ENCODE measurements at regions of chr2 and their contacts with region 1.

Region 1: DNA sequence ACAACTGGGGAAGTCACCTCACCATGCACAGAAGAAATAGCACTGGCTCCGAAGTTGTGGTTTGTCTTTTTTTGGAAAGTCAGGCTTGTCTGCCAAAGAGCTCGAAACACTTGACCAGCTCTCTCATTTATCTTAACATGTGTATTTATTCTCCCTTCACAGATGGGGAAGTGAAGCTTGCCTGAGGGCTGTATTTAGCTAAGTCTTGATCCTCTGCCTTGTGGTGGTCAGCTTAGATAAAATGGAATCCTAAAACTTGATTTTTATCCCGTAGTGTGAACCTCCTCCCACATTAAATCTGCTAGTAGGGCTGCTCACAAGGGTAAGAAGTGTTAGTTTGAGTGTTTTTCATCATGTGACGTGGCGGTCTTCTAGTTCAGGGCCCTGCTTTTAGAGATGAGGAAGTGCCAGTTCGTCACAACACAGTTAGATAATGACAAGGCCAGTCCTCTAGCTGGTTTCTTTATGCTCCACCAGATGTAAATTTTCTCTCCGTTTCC is 89.7 kb downstream of the TMEM247 start:
- DNase-seq: peak; percentile 82
- ATAC-seq: peak; percentile 91
- H3K4me3 ChIP-seq: peak overlapping the region; percentile 41; the same call in 1 of the 2 replicates
- H3K27ac ChIP-seq: peak overlapping the region; percentile 97
- H3K4me1 ChIP-seq: peaks cover 89% of the 10 kb centered on the region
- H3K27me3 ChIP-seq: no peaks in the 10 kb centered on the region
- CTCF ChIP-seq: no peak
- EP300 ChIP-seq: peak in 1 of 2 experiments; percentile 47; a peak in 1 of 4 replicates
- POLR2A ChIP-seq: peak; percentile 63
- RAD21 ChIP-seq: no peak

Region 2: GRCh38 chr2:46164581-46165301 is 404.4 kb before region 1 on chr2:
- CTCF ChIA-PET with region 1: no interaction called
- POLR2A ChIA-PET with region 1: no interaction called
- RAD21 ChIA-PET with region 1: no interaction called
- SMC1A ChIA-PET with region 1: no interaction called
- in situ Hi-C with region 1: no loop called
- intact Hi-C with region 1: no loop called
- DNase-seq: no peak
- ATAC-seq: no peak
- H3K4me3 ChIP-seq: no peak overlapping the region
- H3K27ac ChIP-seq: no peak overlapping the region
- H3K4me1 ChIP-seq: no peaks in the 10 kb centered on the region
- H3K27me3 ChIP-seq: no peaks in the 10 kb centered on the region
- CTCF ChIP-seq: no peak
- EP300 ChIP-seq: no peak
- POLR2A ChIP-seq: no peak
- RAD21 ChIP-seq: no peak

Region 3: GRCh38 chr2:46461011-46461674 is 108.0 kb before region 1 on chr2:
- CTCF ChIA-PET with region 1: interaction called, 5 read pairs
- POLR2A ChIA-PET with region 1: interaction called, 3 read pairs
- RAD21 ChIA-PET with region 1: interaction called, 10 read pairs
- SMC1A ChIA-PET with region 1: interaction called, 10 read pairs
- in situ Hi-C with region 1: no loop called
- intact Hi-C with region 1: no loop called
- DNase-seq: peak; percentile 39
- ATAC-seq: peak; percentile 85
- H3K4me3 ChIP-seq: no peak overlapping the region; the same call in 1 of the 2 replicates
- H3K27ac ChIP-seq: 0 out of 2 replicates have a peak overlapping the region, but pooled peaks have one; percentile 0
- H3K4me1 ChIP-seq: peaks cover 18% of the 10 kb centered on the region
- H3K27me3 ChIP-seq: no peaks in the 10 kb centered on the region; a peak in 1 of 4 replicates
- CTCF ChIP-seq: peak; percentile 97 to 99 (median 99); a peak in 5 of 6 replicates
- EP300 ChIP-seq: no peak
- POLR2A ChIP-seq: no peak
- RAD21 ChIP-seq: peak; percentile 96

Region 4: GRCh38 chr2:46490521-46491141 is 78.5 kb before region 1 on chr2:
- CTCF ChIA-PET with region 1: interaction called, 6 read pairs
- POLR2A ChIA-PET with region 1: interaction called, 7 read pairs
- RAD21 ChIA-PET with region 1: interaction called, 15 read pairs
- SMC1A ChIA-PET with region 1: interaction called, 14 read pairs
- in situ Hi-C with region 1: no loop called
- intact Hi-C with region 1: no loop called
- DNase-seq: no peak
- ATAC-seq: peak; percentile 34
- H3K4me3 ChIP-seq: no peak overlapping the region
- H3K27ac ChIP-seq: 0 out of 2 replicates have a peak overlapping the region, but pooled peaks have one; percentile 12
- H3K4me1 ChIP-seq: peaks cover 30% of the 10 kb centered on the region
- H3K27me3 ChIP-seq: no peaks in the 10 kb centered on the region
- CTCF ChIP-seq: peak; percentile 1 to 46 (median 28); a peak in 4 of 6 replicates
- EP300 ChIP-seq: no peak
- POLR2A ChIP-seq: no peak
- RAD21 ChIP-seq: peak; percentile 65

Region 5: DNA sequence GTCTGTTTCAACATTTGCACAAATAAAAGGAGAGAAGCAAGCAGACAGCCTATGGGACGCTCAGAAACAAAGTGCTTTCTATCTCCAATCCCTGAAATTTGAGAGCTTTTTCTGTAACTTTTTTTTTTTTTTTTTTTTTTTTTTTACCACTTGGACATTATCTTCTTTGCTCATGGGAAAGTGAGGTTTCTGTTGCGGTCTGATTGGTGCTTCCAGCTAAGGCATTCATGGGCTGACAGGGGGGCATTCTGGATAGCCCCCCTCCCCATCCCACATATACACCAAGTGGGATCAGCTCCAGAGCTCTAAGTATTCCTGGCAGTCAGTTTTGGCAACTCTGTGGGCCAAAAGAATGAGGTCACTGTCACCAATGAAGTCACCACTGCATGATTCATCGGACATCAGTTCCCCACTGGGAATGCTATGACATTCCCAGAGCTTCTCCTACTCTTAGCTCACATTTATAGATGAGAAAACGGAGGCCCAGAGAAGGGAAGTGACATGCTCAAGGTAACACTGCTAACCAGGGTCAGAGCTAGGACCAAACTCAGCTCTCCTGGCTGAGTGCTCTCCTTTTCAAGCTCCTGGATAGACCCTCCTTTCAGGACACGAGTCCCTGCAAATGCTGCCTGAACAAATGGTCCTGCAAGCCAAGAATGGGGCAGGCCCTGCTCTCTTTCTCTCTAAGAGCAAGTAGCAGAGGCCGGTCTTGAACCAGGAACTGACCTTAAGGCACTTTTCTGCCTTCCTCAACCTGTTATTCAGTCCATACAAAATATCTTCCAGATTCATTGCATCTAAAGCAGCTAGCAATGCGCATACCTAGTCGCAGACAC is 28.4 kb before region 1 on chr2:
- CTCF ChIA-PET with region 1: interaction called, 7 read pairs
- POLR2A ChIA-PET with region 1: interaction called, 91 read pairs
- RAD21 ChIA-PET with region 1: interaction called, 127 read pairs
- SMC1A ChIA-PET with region 1: interaction called, 188 read pairs
- in situ Hi-C with region 1: no loop called
- intact Hi-C with region 1: no loop called
- DNase-seq: no peak
- ATAC-seq: no peak
- H3K4me3 ChIP-seq: peak overlapping the region; percentile 58
- H3K27ac ChIP-seq: 0 out of 2 replicates have a peak overlapping the region, but pooled peaks have one; percentile 77
- H3K4me1 ChIP-seq: peaks cover 43% of the 10 kb centered on the region
- H3K27me3 ChIP-seq: no peaks in the 10 kb centered on the region
- CTCF ChIP-seq: no peak
- EP300 ChIP-seq: no peak
- POLR2A ChIP-seq: no peak
- RAD21 ChIP-seq: no peak

Region 6: GRCh38 chr2:46555011-46555410 is 14.1 kb before region 1 on chr2:
- CTCF ChIA-PET with region 1: interaction called, 44 read pairs
- POLR2A ChIA-PET with region 1: interaction called, 91 read pairs
- RAD21 ChIA-PET with region 1: interaction called, 127 read pairs
- SMC1A ChIA-PET with region 1: interaction called, 188 read pairs
- in situ Hi-C with region 1: no loop called
- intact Hi-C with region 1: no loop called
- DNase-seq: no peak
- ATAC-seq: peak; percentile 71
- H3K4me3 ChIP-seq: no peak overlapping the region
- H3K27ac ChIP-seq: no peak overlapping the region
- H3K4me1 ChIP-seq: peaks cover 23% of the 10 kb centered on the region
- H3K27me3 ChIP-seq: no peaks in the 10 kb centered on the region
- CTCF ChIP-seq: peak; percentile 31 to 60 (median 48)
- EP300 ChIP-seq: no peak
- POLR2A ChIP-seq: no peak
- RAD21 ChIP-seq: peak; percentile 12; the same call in 1 of the 2 replicates

Region 7: GRCh38 chr2:46589358-46589757 is 20.2 kb after region 1 on chr2:
- CTCF ChIA-PET with region 1: interaction called, 4 read pairs
- POLR2A ChIA-PET with region 1: interaction called, 9 read pairs
- RAD21 ChIA-PET with region 1: interaction called, 8 read pairs
- SMC1A ChIA-PET with region 1: interaction called, 11 read pairs
- in situ Hi-C with region 1: no loop called
- intact Hi-C with region 1: no loop called
- DNase-seq: no peak
- ATAC-seq: no peak
- H3K4me3 ChIP-seq: no peak overlapping the region
- H3K27ac ChIP-seq: no peak overlapping the region
- H3K4me1 ChIP-seq: no peaks in the 10 kb centered on the region
- H3K27me3 ChIP-seq: no peaks in the 10 kb centered on the region
- CTCF ChIP-seq: no peak
- EP300 ChIP-seq: no peak
- POLR2A ChIP-seq: no peak
- RAD21 ChIP-seq: no peak

Region 8: DNA sequence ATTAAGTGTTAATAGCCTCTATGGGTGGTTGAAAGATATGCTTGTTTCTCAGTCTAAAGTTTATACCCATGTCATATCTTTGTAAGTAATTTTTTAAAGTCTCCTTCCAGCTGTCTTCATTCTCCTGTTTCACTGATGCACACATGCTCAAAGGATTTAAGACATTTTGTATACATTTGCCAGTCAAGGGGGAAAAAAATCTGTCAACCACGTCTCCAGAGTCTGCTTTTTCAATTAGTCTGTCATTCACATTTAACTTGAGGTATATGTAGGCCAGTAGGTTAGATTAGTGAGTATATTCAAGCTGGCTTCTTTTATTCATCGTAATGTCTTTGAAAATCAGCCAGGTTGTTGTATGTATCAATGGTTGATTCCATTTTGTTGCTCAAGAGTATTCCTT is 153.0 kb after region 1 on chr2:
- CTCF ChIA-PET with region 1: no interaction called
- POLR2A ChIA-PET with region 1: no interaction called
- RAD21 ChIA-PET with region 1: no interaction called
- SMC1A ChIA-PET with region 1: no interaction called
- in situ Hi-C with region 1: no loop called
- intact Hi-C with region 1: no loop called
- DNase-seq: no peak
- ATAC-seq: no peak
- H3K4me3 ChIP-seq: no peak overlapping the region
- H3K27ac ChIP-seq: no peak overlapping the region
- H3K4me1 ChIP-seq: peaks cover 8% of the 10 kb centered on the region
- H3K27me3 ChIP-seq: no peaks in the 10 kb centered on the region
- CTCF ChIP-seq: no peak
- EP300 ChIP-seq: no peak
- POLR2A ChIP-seq: no peak
- RAD21 ChIP-seq: no peak

Region 9: GRCh38 chr2:46801731-46802664 is 232.9 kb after region 1 on chr2:
- CTCF ChIA-PET with region 1: no interaction called
- POLR2A ChIA-PET with region 1: no interaction called
- RAD21 ChIA-PET with region 1: no interaction called
- SMC1A ChIA-PET with region 1: no interaction called
- in situ Hi-C with region 1: no loop called
- intact Hi-C with region 1: no loop called
- DNase-seq: no peak
- ATAC-seq: no peak
- H3K4me3 ChIP-seq: no peak overlapping the region
- H3K27ac ChIP-seq: no peak overlapping the region
- H3K4me1 ChIP-seq: no peaks in the 10 kb centered on the region
- H3K27me3 ChIP-seq: no peaks in the 10 kb centered on the region; a peak in 2 of 4 replicates
- CTCF ChIP-seq: no peak
- EP300 ChIP-seq: no peak
- POLR2A ChIP-seq: no peak
- RAD21 ChIP-seq: no peak

Region 10: DNA sequence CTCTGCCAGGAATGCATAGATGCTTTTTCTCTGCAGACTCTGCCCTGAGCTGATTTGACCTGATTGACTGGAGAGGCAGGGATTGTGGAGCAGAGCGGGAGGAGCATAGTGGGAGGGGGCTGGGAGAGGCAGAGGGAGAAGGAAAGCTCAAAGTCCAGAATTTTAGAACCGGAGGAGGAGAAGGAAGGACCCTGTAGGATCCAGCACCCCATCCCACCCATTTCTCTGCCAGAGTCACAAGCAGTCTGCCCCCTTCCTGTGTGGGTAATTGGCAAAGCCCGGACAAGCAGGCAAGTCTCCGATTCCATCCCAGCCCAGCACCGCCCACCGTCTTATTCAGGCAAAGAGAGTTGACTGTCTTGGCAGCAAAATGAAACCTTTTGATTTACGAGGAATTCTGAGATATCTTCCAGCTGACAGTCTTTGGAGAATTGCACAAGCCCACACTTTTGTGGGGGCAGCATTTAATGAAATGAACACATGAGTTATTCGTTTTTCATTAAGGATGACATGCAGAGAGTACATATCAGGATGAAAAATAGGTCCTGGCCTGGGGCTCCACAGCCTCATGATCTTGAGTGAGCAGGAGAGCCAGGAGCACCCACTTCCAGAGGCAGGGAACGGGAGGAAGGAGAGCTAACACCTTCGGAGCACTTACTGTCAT is 243.4 kb after region 1 on chr2:
- CTCF ChIA-PET with region 1: no interaction called
- POLR2A ChIA-PET with region 1: no interaction called
- RAD21 ChIA-PET with region 1: no interaction called
- SMC1A ChIA-PET with region 1: no interaction called
- in situ Hi-C with region 1: no loop called
- intact Hi-C with region 1: no loop called
- DNase-seq: no peak
- ATAC-seq: no peak
- H3K4me3 ChIP-seq: no peak overlapping the region
- H3K27ac ChIP-seq: no peak overlapping the region
- H3K4me1 ChIP-seq: no peaks in the 10 kb centered on the region
- H3K27me3 ChIP-seq: peaks cover 0 to 2% of the 10 kb centered on the region in 2 experiments; a peak in 2 of 4 replicates
- CTCF ChIP-seq: no peak
- EP300 ChIP-seq: no peak
- POLR2A ChIP-seq: no peak
- RAD21 ChIP-seq: no peak